ENCODE measurements at regions of chr12 and their contacts with region 1.

Region 1: DNA sequence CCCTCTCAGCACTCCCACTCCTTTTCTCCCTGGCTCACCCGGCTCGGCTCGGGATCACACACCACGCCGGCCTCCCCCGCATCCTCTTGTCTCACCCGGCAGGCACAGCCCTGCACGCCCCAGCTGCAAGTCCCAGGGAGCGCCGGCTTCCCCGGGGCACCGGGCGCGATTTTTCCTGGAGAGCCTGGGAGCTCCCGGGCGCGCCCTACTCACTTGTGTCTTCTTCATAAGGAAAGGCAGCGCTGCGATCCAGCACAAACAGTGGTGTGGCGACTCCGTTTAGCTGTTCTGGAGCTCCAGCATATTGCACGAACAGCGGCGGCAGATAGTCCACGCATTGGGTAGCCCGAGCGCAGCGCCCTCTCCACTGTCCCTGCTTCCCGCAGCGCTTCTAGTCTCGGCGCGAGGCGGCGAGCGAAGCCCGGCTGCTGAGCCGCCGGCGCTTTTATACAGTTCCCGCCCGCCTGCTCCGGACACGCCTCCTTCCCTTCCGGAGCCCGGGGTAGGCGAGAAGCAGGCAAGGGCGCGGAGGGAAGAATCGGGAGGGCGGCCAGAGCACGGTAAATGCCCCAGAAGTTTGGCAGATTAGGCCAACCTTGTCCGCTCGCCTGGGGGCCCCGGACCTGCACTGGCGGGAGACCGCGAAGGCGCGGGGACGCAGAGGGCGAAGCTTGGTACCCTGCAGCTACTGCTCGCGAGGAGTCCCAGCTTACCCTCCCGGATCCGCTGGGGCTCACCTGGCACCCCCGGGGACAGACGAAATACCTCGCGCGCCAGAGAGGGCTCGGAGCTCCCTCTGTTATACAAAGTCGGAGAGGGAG is at the start of gene KITLG:
- DNase-seq: peak; percentile 88
- H3K4me3 ChIP-seq: peak within 1 kb of the TSS; percentile 54 to 69 (median 62)
- H3K27ac ChIP-seq: peak within 1 kb of the TSS; percentile 37
- H3K4me1 ChIP-seq: peaks cover 17% of the 10 kb centered on the region
- H3K27me3 ChIP-seq: no peaks in the 10 kb centered on the region
- CTCF ChIP-seq: peak; percentile 9 to 51
- POLR2A ChIP-seq: peak; percentile 99
- total RNA-seq, gene KITLG: 32.5 and 46.4 TPM in 2 replicates

Region 2: DNA sequence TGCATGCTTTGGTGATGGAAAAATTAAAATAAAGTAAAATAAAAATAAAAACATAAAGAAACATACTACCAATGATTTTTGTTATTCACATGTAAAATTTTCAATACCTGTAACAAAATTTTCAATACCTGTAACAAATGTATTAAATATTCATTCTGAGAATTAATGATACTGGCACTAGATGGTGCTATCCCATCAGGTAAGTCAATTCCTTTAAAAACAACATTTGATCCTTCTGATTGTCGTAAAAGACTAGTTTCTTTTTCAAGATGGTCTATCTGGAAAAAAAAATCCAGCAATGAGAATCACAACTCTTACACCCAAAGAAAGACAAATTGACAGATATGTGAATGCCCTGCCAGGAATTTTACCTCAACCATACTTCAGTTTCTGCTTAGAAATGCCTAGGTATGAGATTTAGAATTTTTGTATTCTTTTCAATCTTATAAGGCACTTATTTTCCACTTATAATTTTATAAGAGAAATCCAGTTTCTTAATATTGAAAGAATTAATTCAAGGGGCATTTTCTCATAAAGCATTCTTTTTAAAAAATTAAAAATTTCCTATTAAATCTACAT is 469.1 kb before region 1 on chr12:
- CTCF ChIA-PET with region 1: no interaction called
- POLR2A ChIA-PET with region 1: no interaction called
- dilution Hi-C with region 1: no loop called
- intact Hi-C with region 1: loop called (anchors 1 kb)
- DNase-seq: peak; percentile 67
- H3K4me3 ChIP-seq: peak overlapping the region in 1 of 3 experiments; percentile 61
- H3K27ac ChIP-seq: peak overlapping the region; percentile 20
- H3K4me1 ChIP-seq: peaks cover 5% of the 10 kb centered on the region
- H3K27me3 ChIP-seq: no peaks in the 10 kb centered on the region
- CTCF ChIP-seq: peak in 1 of 2 donors; percentile 2
- POLR2A ChIP-seq: no peak

Region 3: DNA sequence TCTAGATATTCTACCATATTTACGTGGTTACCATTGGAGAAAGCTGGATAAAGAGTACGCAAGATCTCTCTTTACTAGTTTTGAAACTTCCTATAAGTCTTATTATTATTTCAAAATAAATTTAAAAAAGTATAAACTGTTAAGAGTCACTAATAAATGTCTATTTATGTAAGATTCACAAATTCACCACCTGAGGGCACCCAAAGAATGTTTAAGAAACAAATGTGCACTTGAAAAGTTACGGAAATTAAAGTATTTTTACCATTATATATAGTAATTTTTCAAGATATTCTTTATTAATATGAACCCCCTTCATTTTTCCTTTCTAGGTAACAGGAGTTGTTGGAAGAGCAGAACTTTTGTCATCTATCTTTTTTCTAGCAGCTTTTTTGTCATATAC is 426.3 kb before region 1 on chr12:
- CTCF ChIA-PET with region 1: interaction called, 11 read pairs
- POLR2A ChIA-PET with region 1: interaction called, 3 read pairs
- dilution Hi-C with region 1: no loop called
- intact Hi-C with region 1: loop called (anchors 1 kb)
- DNase-seq: peak; percentile 62
- H3K4me3 ChIP-seq: no peak overlapping the region
- H3K27ac ChIP-seq: no peak overlapping the region
- H3K4me1 ChIP-seq: no peaks in the 10 kb centered on the region
- H3K27me3 ChIP-seq: no peaks in the 10 kb centered on the region
- CTCF ChIP-seq: peak in 1 of 2 donors; percentile 2
- POLR2A ChIP-seq: no peak

Region 4: DNA sequence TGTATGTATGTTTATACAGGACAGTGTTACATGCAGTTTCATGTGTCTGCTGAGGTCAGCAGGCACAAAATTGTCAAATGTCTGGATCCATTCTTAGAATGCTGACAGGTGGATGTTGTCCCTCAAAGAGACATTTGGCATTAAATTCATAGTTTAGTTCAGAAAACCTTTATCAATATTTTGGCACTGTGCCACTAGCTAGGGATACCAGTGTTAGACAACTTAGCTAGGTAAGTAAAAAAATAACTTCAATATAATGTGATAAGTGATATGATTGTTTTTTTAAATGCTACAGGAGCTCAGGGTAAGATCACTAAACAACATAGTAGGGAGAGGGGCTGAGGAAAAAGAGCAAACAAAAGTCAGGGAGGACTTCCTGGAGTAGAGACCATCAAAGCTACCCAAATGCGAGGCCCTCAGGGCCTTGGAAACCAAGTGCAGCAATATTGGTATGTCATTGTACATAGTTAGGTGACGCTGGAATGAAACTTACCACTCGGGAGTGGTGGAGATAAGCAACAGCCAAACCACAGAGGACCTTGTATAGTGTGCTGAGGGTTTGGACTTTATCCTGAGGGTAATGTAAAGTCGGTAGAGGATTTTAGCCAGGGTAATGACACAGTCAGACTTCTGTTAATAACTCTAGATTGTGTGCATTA is 14.0 kb before region 1 on chr12:
- CTCF ChIA-PET with region 1: interaction called, 32 read pairs
- POLR2A ChIA-PET with region 1: interaction called, 8 read pairs
- dilution Hi-C with region 1: no loop called
- intact Hi-C with region 1: no loop called
- DNase-seq: no peak
- H3K4me3 ChIP-seq: no peak overlapping the region
- H3K27ac ChIP-seq: no peak overlapping the region
- H3K4me1 ChIP-seq: peaks cover 9% of the 10 kb centered on the region
- H3K27me3 ChIP-seq: no peaks in the 10 kb centered on the region
- CTCF ChIP-seq: no peak
- POLR2A ChIP-seq: no peak

Region 5: DNA sequence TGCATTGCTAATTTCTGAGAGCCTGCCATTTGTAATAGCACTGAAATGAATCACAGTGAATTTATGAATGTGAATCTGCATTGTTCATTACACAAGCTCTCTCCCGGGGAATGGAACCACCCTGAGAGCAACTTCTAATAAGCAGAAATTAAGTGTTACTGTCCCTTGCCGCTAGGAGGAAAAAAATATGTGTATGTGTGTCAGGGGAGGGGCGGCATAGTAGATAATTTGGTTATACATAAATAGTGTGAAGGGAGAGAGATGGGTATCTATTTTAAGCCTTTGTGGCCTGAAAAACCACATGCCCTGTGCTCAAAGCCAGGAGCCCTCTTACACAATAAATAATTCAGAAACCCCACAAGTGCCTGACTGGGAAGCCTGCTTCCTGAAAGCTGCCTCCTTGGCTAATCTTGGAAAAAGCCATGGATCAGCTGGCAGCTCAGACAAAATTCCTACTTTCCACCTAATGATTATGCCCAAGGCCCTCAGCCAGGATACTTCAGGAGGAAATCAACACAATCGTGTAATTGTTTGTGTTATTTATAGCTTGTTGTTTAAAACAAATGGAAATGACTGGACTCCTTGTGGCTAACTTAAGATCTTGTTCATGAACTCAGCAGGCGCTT is 366.2 kb after region 1 on chr12:
- CTCF ChIA-PET with region 1: interaction called, 4 read pairs
- POLR2A ChIA-PET with region 1: interaction called, 3 read pairs
- dilution Hi-C with region 1: no loop called
- intact Hi-C with region 1: loop called (anchors 2 kb)
- DNase-seq: peak; percentile 89
- H3K4me3 ChIP-seq: no peak overlapping the region
- H3K27ac ChIP-seq: peak overlapping the region; percentile 92
- H3K4me1 ChIP-seq: peaks cover 42% of the 10 kb centered on the region
- H3K27me3 ChIP-seq: no peaks in the 10 kb centered on the region
- CTCF ChIP-seq: no peak
- POLR2A ChIP-seq: no peak